ENCODE measurements at regions of chr3 and their contacts with region 1.

Region 1: DNA sequence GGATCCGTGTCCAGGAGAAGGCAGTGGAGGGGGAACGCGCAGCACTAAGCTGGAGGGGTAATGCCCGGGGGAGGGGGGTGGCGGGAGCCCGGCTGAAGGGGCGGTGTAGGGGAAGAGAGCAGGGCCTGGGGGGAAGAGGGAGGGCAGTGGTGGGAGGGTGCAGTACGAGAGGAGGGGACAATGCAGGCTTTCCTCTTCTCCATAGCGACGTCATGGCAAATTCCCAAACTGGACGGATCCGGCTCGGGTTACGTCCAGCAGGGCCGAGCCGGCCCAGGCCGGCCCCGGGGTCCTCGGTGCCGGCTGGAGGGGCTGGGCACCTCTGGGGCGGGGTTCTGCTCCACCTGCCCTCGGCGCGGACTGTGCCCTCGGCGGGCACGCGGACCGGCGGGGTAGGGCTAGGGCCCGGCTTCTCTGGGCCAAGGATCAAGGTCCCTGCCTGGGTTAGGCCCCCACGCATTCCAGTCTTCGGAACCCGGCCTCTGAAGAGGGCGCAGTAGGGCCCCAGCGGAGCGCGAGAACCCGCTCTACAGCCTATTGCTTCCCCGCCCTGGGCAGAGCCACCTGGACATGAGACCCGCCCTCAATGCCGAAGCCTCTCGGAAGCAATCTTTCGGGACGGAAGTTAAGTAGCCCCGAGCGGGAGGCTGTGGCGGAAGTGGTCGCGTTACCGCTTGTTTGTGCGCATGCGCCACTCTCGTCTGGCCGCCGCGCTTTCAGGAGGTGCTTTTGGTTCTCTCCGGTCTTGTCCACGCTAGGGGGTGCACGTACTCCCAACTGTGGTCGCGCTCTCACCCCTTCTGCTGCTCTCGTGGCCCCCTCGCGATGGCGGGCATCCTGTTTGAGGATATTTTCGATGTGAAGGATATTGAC is 1.4 kb downstream of the POLR2H start:
- DNase-seq: peak; percentile 98
- ATAC-seq: peak; percentile 80
- H3K4me3 ChIP-seq: peak overlapping the region; percentile 95 to 96
- H3K27ac ChIP-seq: peak overlapping the region; percentile 96
- H3K4me1 ChIP-seq: peaks cover 9 to 25% of the 10 kb centered on the region in 2 experiments
- H3K27me3 ChIP-seq: no peaks in the 10 kb centered on the region
- CTCF ChIP-seq: peak in 2 of 3 experiments; percentile 47 to 53; a peak in 4 of 6 replicates
- POLR2A ChIP-seq: peak; percentile 89
- RAD21 ChIP-seq: no peak

Region 2: DNA sequence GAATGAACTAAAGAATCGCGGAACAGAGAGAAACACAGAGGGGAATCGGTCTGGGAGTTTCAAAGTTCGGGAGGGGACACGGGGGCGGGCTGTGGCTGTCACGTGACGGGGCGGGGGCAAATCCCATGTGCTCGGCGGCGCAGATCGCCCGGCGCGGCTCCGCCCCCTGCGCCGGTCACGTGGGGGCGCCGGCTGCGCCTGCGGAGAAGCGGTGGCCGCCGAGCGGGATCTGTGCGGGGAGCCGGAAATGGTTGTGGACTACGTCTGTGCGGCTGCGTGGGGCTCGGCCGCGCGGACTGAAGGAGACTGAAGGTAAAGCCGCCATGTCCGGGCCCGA is 48.6 kb before region 1 on chr3 and contains the start of gene EIF4G1:
- CTCF ChIA-PET with region 1: no interaction called
- POLR2A ChIA-PET with region 1: no interaction called
- RAD21 ChIA-PET with region 1: no interaction called
- intact Hi-C with region 1: loop called (anchors 2 kb)
- DNase-seq: peak; percentile 82
- ATAC-seq: peak; percentile 85
- H3K4me3 ChIP-seq: peak within 1 kb of the TSS; percentile 94 to 98
- H3K27ac ChIP-seq: peak within 1 kb of the TSS; percentile 87
- H3K4me1 ChIP-seq: peaks cover 35 to 47% of the 10 kb centered on the region in 2 experiments
- H3K27me3 ChIP-seq: no peaks in the 10 kb centered on the region
- CTCF ChIP-seq: no peak
- POLR2A ChIP-seq: peak; percentile 48
- RAD21 ChIP-seq: no peak
- total RNA-seq, gene EIF4G1: 496 TPM

Measured in HCT116 (cell line).